Activated CD4-positive, alpha-beta T cell treated with anti-CD3 and anti-CD28 coated beads for 36 hours (primary cell): ENCODE measurements at regions of chr15 and their contacts with region 1.

Region 1: DNA sequence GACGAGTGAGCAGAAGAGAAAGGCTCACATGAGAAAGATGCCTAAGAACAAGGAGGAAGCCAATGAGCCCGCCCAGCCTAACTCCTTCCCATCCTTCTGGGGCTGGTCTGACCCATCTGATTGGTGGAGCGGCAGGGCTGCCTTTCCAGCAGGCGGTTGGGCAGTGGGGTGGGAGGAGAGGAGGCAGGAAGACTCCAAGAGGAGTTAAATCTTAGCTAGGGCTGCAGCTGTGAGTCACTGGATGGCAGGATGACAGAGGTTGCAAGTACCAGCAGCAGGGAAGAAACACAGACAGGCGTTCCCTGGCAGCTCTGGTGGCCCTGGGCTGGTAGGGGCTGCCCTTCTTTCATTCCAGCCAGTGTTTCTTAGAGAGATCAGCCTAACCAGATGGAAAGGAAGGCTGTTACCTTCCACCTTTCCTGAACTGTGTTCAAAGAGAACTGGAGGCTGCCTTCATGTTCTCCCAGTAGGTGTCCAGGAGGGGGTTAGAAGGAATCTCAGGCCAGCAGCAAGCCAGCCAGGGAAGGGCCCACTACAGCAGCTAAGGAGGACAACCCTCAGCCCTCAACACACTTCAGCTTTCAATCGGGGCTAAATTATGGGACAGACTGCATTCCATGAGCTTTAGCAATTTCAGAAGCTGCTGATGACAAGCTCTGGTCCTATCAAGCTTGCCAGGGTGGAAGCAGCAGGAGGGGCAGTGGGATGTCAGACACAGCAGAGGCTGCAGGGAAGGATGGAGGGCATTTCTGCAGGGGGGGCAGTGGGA is 50.3 kb downstream of the CHSY1 start:
- DNase-seq: peak; percentile 61
- ATAC-seq: no peak
- H3K4me3 Mint-ChIP-seq: no peak overlapping the region
- H3K27ac Mint-ChIP-seq: peak overlapping the region; percentile 94
- H3K4me1 Mint-ChIP-seq: peaks cover 89% of the 10 kb centered on the region
- H3K27me3 Mint-ChIP-seq: no peaks in the 10 kb centered on the region

Region 2: DNA sequence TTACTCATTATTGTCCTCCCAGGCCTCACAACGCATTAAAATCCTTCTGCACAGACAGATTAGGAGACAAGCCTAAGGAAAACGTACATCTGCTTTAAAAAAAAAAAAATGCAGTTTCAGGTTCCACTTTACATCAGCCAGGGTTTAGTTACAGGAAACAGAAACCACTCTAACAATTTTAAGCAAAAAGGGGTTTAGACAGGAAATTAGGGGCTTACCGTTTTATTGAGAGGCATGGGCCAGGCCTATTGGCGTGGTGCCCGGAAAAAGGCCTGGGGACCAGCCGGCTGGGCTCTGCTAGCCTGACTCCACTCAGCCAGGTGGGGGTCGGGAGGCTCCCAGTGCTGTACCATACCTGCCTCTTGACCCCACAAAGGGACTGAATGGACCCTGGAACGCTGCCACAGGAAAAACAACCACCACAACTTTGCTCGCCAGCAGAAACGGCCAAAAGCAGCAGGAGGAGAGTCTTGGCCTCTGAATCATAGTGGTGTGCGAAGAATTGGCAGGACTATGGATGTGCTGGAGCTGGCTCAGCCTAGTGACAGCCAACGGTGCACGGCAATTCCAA is 74.0 kb before region 1 on chr15:
- CTCF ChIA-PET with region 1: no interaction called
- POLR2A ChIA-PET with region 1: interaction called, 3 read pairs
- intact Hi-C with region 1: loop called (anchors 1 kb)
- DNase-seq: peak; percentile 66
- ATAC-seq: peak; percentile 82
- H3K4me3 Mint-ChIP-seq: peak overlapping the region; percentile 51
- H3K27ac Mint-ChIP-seq: peak overlapping the region; percentile 95
- H3K4me1 Mint-ChIP-seq: peaks cover 52% of the 10 kb centered on the region
- H3K27me3 Mint-ChIP-seq: no peaks in the 10 kb centered on the region

Region 3: DNA sequence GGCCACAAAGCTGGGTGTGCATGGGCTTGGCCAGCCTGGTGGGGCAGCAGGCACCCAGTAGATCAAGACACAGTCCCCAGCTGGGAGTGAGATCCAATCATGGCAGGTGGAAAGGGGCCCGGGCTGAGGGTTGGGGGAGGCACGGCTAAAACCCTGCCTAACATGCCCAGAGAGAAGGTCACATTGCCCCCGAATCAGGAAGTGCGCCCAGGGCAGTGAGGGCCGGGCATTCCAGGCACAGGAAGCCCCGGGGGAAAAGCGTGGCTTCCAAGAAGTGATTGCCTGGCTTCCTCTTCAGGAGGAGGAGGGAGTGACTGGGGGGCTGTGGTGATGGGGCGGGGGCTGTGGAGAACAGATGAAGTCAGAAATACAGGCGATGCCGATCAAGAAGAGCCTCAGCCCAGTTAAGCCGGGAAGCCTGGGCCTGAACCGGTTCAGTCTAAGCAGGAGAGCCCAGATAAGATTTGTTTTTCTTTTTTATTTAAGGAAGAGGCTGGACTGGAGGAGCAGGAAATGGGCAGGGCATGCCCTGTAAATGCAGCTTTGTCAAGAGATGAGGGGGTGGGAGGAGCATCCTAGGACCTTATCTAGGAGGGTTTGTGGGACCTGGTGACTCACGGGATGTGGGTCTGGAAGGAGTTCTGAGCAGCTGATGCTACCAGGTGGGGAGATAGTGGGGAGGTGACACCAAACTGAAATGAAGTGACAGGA is 33.7 kb before region 1 on chr15:
- CTCF ChIA-PET with region 1: no interaction called
- POLR2A ChIA-PET with region 1: no interaction called
- intact Hi-C with region 1: loop called in 1 of 2 experiments (anchors 1 kb)
- DNase-seq: peak; percentile 86
- ATAC-seq: peak; percentile 97
- H3K4me3 Mint-ChIP-seq: peak overlapping the region; percentile 32
- H3K27ac Mint-ChIP-seq: peak overlapping the region; percentile 82
- H3K4me1 Mint-ChIP-seq: peaks cover 22% of the 10 kb centered on the region
- H3K27me3 Mint-ChIP-seq: no peaks in the 10 kb centered on the region

Region 4: DNA sequence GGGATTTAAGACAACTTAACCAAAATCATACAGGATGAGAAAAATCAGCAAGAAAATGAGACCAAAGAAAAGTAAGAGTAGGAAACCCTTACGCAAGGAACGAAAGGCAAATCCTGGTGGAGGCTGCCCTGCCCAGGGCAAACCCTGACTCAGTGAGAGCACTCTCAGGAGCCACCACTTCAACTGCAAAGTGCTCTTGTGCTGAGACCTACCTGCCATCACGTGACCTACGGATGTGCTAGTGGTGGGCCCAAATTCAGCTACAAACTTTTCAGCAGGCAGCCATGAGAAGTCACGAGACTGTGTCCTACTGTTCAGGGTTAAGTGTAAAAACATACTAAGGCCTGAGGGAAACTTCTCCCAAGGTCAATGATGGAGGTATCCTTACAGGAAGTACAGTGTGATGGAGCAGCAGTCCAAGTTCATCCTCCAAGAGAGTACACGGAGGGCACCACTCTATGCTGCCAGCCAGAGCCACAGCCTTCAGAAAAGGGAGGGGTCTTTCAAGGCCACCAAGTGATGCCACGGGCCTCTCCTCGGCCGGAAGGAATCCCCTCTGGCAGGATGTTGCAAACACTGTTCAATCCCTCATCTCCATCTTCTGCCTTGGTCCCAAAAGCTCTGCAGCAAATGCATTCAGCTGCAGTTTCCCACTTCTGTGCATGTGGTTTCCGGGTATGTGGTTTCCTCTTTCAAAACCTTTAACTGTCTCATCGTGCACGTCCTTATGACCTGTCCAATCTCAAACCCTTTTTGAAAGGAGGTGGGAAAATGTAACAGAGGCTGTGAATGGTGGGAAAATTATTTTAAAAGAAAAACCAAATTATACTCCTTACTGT is 40.8 kb after region 1 on chr15:
- CTCF ChIA-PET with region 1: interaction called, 7 read pairs
- POLR2A ChIA-PET with region 1: interaction called, 8 read pairs
- intact Hi-C with region 1: loop called (anchors 1 kb)
- DNase-seq: peak; percentile 73
- ATAC-seq: peak; percentile 75
- H3K4me3 Mint-ChIP-seq: peak overlapping the region; percentile 40
- H3K27ac Mint-ChIP-seq: peak overlapping the region; percentile 89
- H3K4me1 Mint-ChIP-seq: peaks cover 86% of the 10 kb centered on the region
- H3K27me3 Mint-ChIP-seq: no peaks in the 10 kb centered on the region

Region 5: GRCh38 chr15:101723874-101724674 is 522.5 kb after region 1 on chr15 and contains the start of gene TARS3:
- CTCF ChIA-PET with region 1: no interaction called
- POLR2A ChIA-PET with region 1: no interaction called
- intact Hi-C with region 1: loop called in 1 of 2 experiments (anchors 10 kb)
- DNase-seq: peak; percentile 98
- ATAC-seq: peak; percentile 93
- H3K4me3 Mint-ChIP-seq: peak within 1 kb of the TSS; percentile 78
- H3K27ac Mint-ChIP-seq: peak within 1 kb of the TSS; percentile 86
- H3K4me1 Mint-ChIP-seq: peaks cover 17% of the 10 kb centered on the region
- H3K27me3 Mint-ChIP-seq: no peaks in the 10 kb centered on the region
- total RNA-seq, gene TARS3: 9.3 to 10.3 TPM